ENCODE measurements at regions of chr15 and their contacts with region 1.

Region 1: GRCh38 chr15:95291898-95292472 is 1038.5 kb upstream of the NR2F2 start:
- DNase-seq: no peak
- ATAC-seq: no peak
- H3K4me3 ChIP-seq: no peak overlapping the region
- H3K27ac ChIP-seq: no peak overlapping the region
- H3K4me1 ChIP-seq: no peaks in the 10 kb centered on the region
- H3K27me3 ChIP-seq: peaks cover 0 to 9% (median 2%) of the 10 kb centered on the region in 3 donors
- CTCF ChIP-seq: peak; percentile 66

Region 2: DNA sequence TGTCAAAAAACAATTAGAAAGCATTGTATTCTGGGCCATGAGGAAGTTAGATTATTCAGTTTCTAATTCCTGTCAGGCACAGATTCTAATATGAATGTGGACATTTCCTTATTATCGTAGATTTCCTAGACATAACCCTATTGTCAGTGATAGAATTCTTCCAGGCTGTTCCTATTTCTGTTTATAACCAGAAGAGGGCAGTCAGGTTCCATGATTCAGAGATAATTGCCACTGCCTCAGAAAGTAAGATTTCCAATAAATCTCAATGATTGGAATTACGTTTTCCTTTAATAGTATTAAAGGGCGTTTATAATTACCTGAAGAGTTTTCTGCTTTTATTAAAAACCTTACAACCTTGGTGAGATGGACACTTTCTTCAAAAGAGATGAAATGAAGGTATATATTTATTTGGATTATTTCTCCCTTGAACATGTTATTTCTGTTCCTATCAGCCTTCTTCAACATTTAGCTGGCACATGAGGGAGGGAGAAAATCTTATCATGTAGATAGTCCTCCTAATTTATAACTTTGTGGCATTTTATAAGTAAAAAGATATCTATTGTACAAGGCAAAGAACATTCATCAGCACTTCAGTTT is 621.4 kb before region 1 on chr15:
- intact Hi-C with region 1: loop called in 1 of 2 experiments (anchors 10 kb)
- DNase-seq: no peak
- ATAC-seq: no peak
- H3K4me3 ChIP-seq: no peak overlapping the region
- H3K27ac ChIP-seq: no peak overlapping the region
- H3K4me1 ChIP-seq: no peaks in the 10 kb centered on the region
- H3K27me3 ChIP-seq: peaks cover 0 to 5% (median 0%) of the 10 kb centered on the region in 3 donors
- CTCF ChIP-seq: peak; percentile 73

Region 3: DNA sequence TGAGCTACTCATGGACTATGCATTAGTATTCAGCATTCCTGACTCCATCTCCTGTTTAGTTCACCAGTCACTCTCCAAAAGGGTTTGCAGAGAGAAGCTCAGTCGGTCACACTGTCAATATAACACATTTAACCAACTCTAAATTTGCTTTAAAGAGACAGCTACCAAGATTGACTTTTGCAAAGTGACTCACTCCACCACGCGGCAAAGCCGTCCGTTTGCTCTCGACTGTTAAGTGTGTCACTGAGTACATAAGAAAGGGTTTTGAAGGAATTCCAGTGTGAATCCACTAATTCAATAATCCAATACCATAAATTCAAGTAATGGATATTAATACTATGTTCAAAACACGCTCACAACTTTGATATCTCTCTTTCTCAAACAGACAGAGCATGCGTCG is 31.8 kb after region 1 on chr15:
- intact Hi-C with region 1: loop called in 1 of 2 experiments (anchors 2 kb)
- DNase-seq: no peak
- ATAC-seq: no peak
- H3K4me3 ChIP-seq: peak overlapping the region; percentile 0
- H3K27ac ChIP-seq: no peak overlapping the region
- H3K4me1 ChIP-seq: no peaks in the 10 kb centered on the region
- H3K27me3 ChIP-seq: peaks cover 0 to 26% (median 0%) of the 10 kb centered on the region in 3 donors
- CTCF ChIP-seq: no peak